Activated B cell treated with CpG ODN at 0.5 μM for 24 hours (primary cell): ENCODE measurements at regions of chr3 and their contacts with region 1.

Region 1: GRCh38 chr3:169812332-169813235 is at the starts of genes LRRC34 and LRRIQ4:
- DNase-seq: peak; percentile 70
- ATAC-seq: peak; percentile 56
- H3K4me3 Mint-ChIP-seq: peak within 1 kb of the TSS; percentile 85
- H3K27ac Mint-ChIP-seq: peak within 1 kb of the TSS; percentile 97
- H3K4me1 Mint-ChIP-seq: peaks cover 37% of the 10 kb centered on the region
- H3K27me3 Mint-ChIP-seq: no peaks in the 10 kb centered on the region
- CTCF ChIP-seq: no peak
- total RNA-seq, gene LRRC34: 4.2 and 5.7 TPM in 2 replicates
- total RNA-seq, gene LRRIQ4: 0.29 and 0.40 TPM in 2 replicates

Region 2: GRCh38 chr3:169836078-169836941 is 23.7 kb after region 1 on chr3:
- CTCF ChIA-PET with region 1: interaction called, 4 read pairs
- POLR2A ChIA-PET with region 1: interaction called, 22 read pairs
- intact Hi-C with region 1: loop called (anchors 1 kb)
- DNase-seq: no peak
- ATAC-seq: peak; percentile 93
- H3K4me3 Mint-ChIP-seq: peak overlapping the region; percentile 44
- H3K27ac Mint-ChIP-seq: peak overlapping the region; percentile 97
- H3K4me1 Mint-ChIP-seq: peaks cover 38% of the 10 kb centered on the region
- H3K27me3 Mint-ChIP-seq: no peaks in the 10 kb centered on the region
- CTCF ChIP-seq: no peak

Region 3: DNA sequence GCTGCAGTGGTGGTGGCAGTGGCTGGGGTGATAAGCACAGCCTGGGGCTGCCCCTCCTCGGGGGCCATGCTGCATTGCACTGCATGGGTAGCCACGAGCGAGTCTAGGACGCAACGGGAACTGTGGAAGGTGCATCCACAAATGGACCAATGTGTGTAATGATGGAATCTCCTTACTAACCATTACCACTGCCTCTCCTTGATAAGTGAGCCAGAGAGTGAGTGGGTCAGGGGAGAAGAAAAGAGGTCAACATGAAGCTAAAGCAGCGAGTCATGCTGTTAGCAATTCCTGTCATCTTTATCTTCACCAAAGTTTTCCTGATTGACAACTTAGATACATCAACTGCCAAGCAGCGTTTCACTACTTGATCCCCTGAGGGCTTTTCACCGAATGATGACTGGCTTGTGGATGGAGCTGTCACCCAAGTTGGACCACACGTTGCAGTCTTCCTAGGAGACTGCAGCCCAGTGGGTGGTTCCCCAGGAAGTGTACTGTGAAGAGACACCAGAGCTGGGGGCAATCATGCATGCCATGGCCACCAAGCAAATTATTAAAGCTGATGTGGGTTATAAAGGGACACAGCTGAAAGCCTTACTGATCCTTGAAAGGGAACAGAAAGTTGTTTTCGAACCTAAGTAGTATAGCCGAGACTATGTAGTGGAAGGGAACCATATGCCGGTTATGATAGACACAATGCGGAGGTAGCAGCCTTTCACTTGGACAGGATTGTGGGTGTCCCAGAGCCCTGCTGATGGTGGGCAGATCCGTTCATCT is 119.3 kb after region 1 on chr3:
- CTCF ChIA-PET with region 1: interaction called, 3 read pairs
- POLR2A ChIA-PET with region 1: interaction called, 6 read pairs
- intact Hi-C with region 1: loop called (anchors 1 kb)
- DNase-seq: peak; percentile 55
- ATAC-seq: peak; percentile 88
- H3K4me3 Mint-ChIP-seq: peak overlapping the region; percentile 70
- H3K27ac Mint-ChIP-seq: peak overlapping the region; percentile 95
- H3K4me1 Mint-ChIP-seq: peaks cover 52% of the 10 kb centered on the region
- H3K27me3 Mint-ChIP-seq: no peaks in the 10 kb centered on the region
- CTCF ChIP-seq: no peak

Region 4: DNA sequence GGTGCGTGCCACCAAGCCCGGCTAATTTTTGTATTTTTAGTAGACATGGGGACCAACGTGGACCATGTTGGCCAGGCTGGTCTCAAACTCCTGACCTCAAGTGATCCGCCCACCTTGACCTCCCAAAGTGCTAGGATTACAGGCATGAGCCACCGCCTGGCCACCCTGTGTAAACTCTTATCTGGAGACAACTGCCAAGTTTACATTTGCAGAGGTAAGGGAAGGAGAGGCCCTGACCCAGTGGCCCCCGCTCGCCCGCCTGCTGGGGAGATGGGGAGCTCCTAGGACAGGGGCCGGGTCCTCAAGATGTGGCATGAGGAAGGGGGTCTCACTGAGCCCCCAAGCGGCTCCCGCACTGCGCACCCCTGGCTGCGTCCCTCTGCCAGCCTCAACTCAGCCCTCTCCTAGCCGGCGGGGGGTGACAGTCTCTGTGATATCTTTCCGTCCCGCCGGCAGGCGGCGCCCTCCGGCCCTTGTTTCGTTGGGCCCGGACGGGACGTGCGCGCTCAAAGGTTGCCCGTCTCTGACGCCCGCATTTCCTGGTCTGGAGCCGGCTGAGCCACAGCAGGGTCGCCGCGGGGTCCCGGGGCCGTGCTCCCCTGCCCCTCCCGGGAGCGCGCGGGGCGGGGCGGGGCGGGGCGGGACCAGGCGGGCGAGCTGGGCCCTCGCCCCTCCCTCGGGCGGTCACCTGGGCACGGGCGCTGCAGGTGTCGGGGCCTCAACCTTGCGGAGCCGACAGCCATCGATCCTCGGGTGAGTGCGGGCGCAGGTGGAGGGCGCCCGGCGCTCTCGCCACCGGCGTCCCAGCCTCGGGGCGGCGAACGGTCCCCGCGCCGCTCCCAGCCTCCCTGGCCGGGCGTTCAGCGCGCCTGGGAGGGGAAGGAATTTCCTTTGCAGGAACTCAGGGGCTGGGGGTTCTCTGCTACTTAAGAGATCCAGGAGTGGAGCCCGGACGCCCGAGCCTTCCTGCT is 225.2 kb after region 1 on chr3 and contains the start of gene GPR160:
- CTCF ChIA-PET with region 1: no interaction called
- POLR2A ChIA-PET with region 1: no interaction called
- intact Hi-C with region 1: loop called (anchors 1 kb)
- DNase-seq: peak; percentile 88
- ATAC-seq: peak; percentile 77
- H3K4me3 Mint-ChIP-seq: peak within 1 kb of the TSS; percentile 93
- H3K27ac Mint-ChIP-seq: peak within 1 kb of the TSS; percentile 88
- H3K4me1 Mint-ChIP-seq: peaks cover 46% of the 10 kb centered on the region
- H3K27me3 Mint-ChIP-seq: no peaks in the 10 kb centered on the region
- CTCF ChIP-seq: peak; percentile 52
- total RNA-seq, gene GPR160: 63.2 and 65.5 TPM in 2 replicates

Region 5: GRCh38 chr3:170180908-170181879 is 368.6 kb after region 1 on chr3 and contains the start of gene PHC3:
- CTCF ChIA-PET with region 1: no interaction called
- POLR2A ChIA-PET with region 1: no interaction called
- intact Hi-C with region 1: loop called (anchors 2 kb)
- DNase-seq: peak; percentile 92
- ATAC-seq: peak; percentile 80
- H3K4me3 Mint-ChIP-seq: peak within 1 kb of the TSS; percentile 96
- H3K27ac Mint-ChIP-seq: peak within 1 kb of the TSS; percentile 98
- H3K4me1 Mint-ChIP-seq: peaks cover 32% of the 10 kb centered on the region
- H3K27me3 Mint-ChIP-seq: no peaks in the 10 kb centered on the region
- CTCF ChIP-seq: no peak
- total RNA-seq, gene PHC3: 105 TPM in 2 replicates